Heart left ventricle (tissue), 16 donors: ENCODE measurements at regions of chr14 and their contacts with region 1.

Region 1: DNA sequence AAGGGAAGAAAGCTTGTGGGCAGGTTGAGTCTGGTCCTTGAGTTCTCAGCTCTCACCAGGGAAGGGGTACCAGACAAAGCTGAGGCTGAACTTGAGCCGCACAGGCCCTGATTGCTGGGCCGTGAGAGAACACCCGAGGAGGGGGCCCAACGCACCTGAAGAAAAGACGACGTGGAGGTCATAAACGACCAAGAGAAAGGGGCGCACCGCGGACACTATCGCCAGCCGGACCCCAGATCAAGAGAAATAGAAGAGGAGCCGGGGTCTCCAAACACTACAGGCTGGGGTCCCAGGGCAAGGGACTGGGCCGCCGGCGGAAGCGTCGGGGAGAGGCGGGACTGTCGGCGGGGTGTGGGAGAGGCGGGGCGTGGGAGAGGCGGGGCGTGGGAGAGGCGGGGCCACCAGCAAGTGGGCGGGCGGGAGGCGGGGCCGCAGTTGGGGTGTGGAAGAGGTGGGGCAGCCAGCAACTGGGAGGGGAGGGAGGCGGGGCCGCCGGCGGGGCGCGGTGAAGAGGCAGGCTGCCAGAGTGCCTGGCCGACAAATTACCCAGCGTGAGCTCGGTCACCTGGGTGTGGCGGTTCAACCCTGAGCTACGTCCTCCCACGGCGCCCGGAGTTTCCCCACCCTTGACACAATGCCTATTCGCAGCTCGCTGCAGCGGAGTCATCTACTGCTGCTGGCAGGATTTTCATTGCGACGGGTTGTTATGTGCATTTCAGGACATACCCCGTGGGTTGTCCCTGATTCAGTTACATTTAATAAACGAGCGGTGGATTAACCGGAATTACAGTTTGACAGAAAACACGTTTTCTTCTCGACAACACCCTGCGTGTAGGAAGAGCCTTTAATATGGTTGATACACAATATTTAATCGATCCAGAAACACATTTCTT is 15.5 kb upstream of the NEMF start:
- DNase-seq: peak; percentile 97 to 99 (median 97)
- ATAC-seq: peak; percentile 94 to 98 (median 97)
- H3K4me3 ChIP-seq: peak overlapping the region; percentile 45 to 84 (median 68)
- H3K27ac ChIP-seq: peak overlapping the region; percentile 56 to 96 (median 93)
- H3K4me1 ChIP-seq: peaks cover 0 to 49% (median 11%) of the 10 kb centered on the region in 12 donors
- H3K27me3 ChIP-seq: no peaks in the 10 kb centered on the region
- CTCF ChIP-seq: peak in 1 of 12 donors; percentile 5
- POLR2A ChIP-seq: peak in 1 of 2 donors; percentile 82

Region 2: DNA sequence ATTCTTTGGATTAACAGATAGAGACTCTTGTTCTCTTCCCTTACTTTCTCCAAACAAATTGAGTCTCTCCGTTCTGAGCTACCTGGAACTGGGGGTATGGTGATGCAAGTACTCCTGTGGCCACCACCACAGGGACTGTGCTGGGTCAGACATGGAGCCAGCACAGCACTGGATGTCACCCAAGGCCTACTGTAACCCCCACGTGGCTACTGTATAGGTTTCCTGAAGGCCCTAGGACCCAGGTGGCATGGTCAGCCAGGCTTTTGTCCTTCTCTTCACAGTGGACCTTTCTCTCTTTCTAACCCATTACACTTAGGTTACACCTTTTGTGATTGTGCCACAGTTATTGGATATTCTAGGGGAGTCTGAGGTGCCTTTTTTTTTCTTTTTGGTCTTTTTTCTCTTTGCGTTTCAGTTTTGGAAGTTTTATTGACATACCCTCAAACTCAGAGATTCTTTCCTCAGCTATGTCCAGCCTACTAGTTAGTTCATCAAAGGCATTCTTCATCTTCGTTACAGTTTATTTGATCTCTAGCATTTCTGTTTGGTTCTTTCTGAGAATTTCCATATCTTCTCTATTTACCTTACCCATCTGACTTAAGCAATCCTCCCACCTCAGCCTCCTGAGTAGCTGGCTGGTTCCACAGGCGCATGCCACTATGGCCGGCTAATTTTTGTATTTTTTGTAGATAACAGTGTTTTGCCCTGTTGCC is 106.1 kb before region 1 on chr14:
- intact Hi-C with region 1: no loop called
- DNase-seq: no peak
- ATAC-seq: no peak
- H3K4me3 ChIP-seq: no peak overlapping the region
- H3K27ac ChIP-seq: no peak overlapping the region
- H3K4me1 ChIP-seq: peaks cover 0 to 5% (median 0%) of the 10 kb centered on the region in 12 donors
- H3K27me3 ChIP-seq: no peaks in the 10 kb centered on the region
- CTCF ChIP-seq: no peak
- POLR2A ChIP-seq: no peak

Region 3: GRCh38 chr14:49892636-49893308 is 24.7 kb after region 1 on chr14 and contains the start of gene ARF6:
- intact Hi-C with region 1: loop called in 5 of 10 experiments (anchors 1 to 2 kb)
- DNase-seq: peak; percentile 99 to 100 (median 99)
- ATAC-seq: peak; percentile 98 to 99 (median 99)
- H3K4me3 ChIP-seq: peak within 1 kb of the TSS; percentile 77 to 99 (median 92)
- H3K27ac ChIP-seq: peak within 1 kb of the TSS; percentile 97 to 100 (median 100)
- H3K4me1 ChIP-seq: peaks cover 14 to 49% (median 39%) of the 10 kb centered on the region in 12 donors
- H3K27me3 ChIP-seq: no peaks in the 10 kb centered on the region
- CTCF ChIP-seq: peak in 5 of 12 donors; percentile 16 to 43 (median 25)
- POLR2A ChIP-seq: peak; percentile 51 to 94
- total RNA-seq, gene ARF6: 20.8 to 49.3 (median 27.4) TPM

Region 4: DNA sequence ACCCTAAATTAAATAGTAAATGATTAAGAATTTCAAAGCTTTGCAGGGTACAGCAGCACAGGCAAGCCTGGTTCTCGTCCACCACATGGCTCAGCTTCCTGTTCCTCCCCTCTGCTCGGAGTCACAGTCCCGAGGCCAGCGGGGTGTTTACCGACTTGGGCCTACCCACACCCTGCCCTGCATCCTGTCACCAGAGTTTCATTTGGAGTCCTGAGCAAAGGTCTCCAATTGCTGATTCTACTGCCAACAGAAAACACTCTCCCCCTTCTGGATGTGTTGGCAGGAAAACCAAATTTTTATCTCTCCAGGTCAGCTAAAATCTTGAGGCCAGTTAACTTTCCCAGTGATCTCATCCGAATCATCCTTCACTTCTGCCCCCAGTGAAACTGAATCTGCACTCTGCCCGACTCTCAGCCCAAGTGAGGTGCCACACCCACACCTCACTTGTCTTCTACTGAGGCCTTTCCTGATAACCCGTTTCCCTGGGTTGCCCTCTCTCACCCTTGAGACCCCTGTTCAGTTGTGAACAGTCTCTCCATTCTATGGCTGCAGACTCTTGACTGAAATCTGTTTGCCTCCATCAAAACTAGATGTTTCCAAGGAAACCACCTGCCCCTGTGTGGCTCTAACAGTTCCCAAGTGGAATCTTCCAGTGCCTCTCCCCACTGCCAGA is 177.1 kb after region 1 on chr14:
- intact Hi-C with region 1: loop called in 2 of 10 experiments (anchors 5 kb)
- DNase-seq: peak; percentile 79 to 88 (median 84)
- ATAC-seq: peak; percentile 88 to 94 (median 91)
- H3K4me3 ChIP-seq: no peak overlapping the region
- H3K27ac ChIP-seq: peak overlapping the region; percentile 58 to 95 (median 73)
- H3K4me1 ChIP-seq: peaks cover 0 to 66% (median 35%) of the 10 kb centered on the region in 12 donors
- H3K27me3 ChIP-seq: no peaks in the 10 kb centered on the region
- CTCF ChIP-seq: peak in 2 of 12 donors; percentile 9 to 15
- POLR2A ChIP-seq: no peak

Region 5: GRCh38 chr14:50109342-50109741 is 241.3 kb after region 1 on chr14:
- intact Hi-C with region 1: loop called (anchors 1 to 5 kb)
- DNase-seq: no peak
- ATAC-seq: no peak
- H3K4me3 ChIP-seq: no peak overlapping the region
- H3K27ac ChIP-seq: no peak overlapping the region
- H3K4me1 ChIP-seq: peaks cover 0 to 6% (median 2%) of the 10 kb centered on the region in 12 donors
- H3K27me3 ChIP-seq: no peaks in the 10 kb centered on the region
- CTCF ChIP-seq: no peak
- POLR2A ChIP-seq: no peak

Region 6: GRCh38 chr14:50532502-50533240 is 664.6 kb after region 1 on chr14 and contains the start of gene MAP4K5:
- intact Hi-C with region 1: loop called in 1 of 10 experiments (anchors 5 kb)
- DNase-seq: peak; percentile 91 to 96 (median 93)
- ATAC-seq: peak; percentile 97 to 100 (median 100)
- H3K4me3 ChIP-seq: peak within 1 kb of the TSS; percentile 72 to 98 (median 90)
- H3K27ac ChIP-seq: peak within 1 kb of the TSS; percentile 78 to 98 (median 94)
- H3K4me1 ChIP-seq: peaks cover 5 to 44% (median 25%) of the 10 kb centered on the region in 12 donors
- H3K27me3 ChIP-seq: no peaks in the 10 kb centered on the region
- CTCF ChIP-seq: peak; percentile 79 to 96 (median 93)
- POLR2A ChIP-seq: peak in 1 of 2 donors; percentile 85
- total RNA-seq, gene MAP4K5: 9.0 to 43.3 (median 16.6) TPM